Activated CD4-positive, alpha-beta memory T cell treated with anti-CD3 and anti-CD28 coated beads, Interleukin-2, amount 10 ng/mL, durations not matched to agents 7 days and 5 days (primary cell): ENCODE measurements at regions of chr3 and their contacts with region 1.

Region 1: DNA sequence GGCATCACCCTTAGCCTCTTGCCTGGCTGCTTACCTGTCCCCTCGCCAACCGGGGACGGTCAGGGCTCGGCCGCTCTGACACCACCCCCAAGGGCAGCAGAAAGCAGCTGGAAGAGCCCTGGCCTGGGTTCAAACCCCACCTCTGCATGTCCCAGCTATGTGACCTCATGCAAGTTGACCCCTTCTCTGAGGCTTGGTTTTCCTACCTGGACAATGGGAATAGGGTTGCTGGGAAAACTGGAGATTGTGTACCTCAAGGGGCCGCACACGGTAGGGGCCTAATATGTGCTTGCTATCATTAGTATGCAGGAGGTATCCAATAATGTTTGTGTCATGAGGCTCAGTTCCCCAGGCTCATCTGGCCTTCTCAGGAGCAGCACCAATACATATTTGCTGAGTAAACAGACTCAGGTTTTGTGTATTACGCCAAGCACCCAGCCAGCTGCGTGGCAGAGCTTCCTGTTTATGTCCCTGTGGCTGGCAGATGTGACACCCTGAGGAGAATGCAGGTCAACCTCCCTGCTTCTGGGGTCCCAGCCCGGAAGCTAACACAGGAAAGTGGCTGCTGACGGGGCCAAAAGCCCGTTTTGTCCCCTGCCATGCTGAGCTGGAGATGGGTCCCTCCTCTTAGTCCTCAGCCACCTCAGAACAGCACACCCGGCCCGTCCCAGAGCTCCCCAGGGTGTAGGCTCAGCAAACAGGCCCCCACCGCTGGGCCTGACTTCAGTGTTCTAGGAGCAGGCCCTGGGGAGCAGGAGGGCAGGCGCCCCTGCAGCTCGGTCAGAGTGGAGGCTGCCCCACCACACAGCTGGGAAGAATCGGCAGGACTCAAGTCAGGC is 29.7 kb downstream of the PLXND1 start:
- DNase-seq: peak; percentile 83
- H3K4me3 Mint-ChIP-seq: no peak overlapping the region
- H3K27ac Mint-ChIP-seq: peak overlapping the region; percentile 94
- H3K4me1 Mint-ChIP-seq: peaks cover 40% of the 10 kb centered on the region
- H3K27me3 Mint-ChIP-seq: no peaks in the 10 kb centered on the region

Region 2: DNA sequence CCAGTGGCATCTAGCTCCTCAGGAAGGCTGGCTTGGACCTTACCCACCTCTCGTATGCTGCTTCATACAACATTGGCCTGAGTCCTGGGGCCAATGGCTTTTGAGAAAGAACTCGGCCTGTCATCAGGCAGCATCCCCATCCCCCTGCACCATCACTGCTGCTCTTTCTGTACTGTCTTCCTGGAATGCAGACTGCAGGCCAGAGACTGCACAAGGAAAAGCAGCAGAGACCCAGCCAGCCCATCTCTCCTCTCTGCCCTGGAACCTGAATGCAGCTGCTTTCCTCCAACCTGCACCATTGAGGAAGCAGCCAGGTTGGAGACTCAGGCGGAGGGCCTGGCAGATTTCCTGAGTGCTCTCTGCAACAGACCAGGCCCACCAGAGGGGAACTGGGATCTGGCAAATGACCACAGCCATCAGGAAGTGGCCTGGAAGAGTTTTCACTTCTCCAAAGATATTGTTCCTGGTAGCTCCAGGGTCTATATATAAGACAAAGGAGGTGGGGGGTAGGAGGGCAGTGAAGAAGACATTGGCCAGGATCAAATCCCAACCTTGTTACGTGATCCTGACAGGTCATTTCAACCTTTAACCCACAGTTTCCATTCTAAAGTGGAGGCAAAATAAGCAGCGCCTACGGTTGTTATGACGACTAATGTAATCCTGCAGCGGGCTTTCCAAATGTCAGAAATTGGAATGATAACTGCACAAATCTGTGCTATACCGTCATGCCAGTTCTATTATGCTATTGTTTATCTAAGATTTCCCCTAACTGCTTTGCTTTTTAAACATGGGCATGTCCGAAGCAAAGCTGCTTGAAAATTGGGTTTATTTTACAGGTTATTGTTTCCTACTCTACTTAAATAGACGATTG is 875.2 kb before region 1 on chr3:
- CTCF ChIA-PET with region 1: no interaction called
- POLR2A ChIA-PET with region 1: no interaction called
- DNase-seq: no peak
- H3K4me3 Mint-ChIP-seq: no peak overlapping the region
- H3K27ac Mint-ChIP-seq: no peak overlapping the region
- H3K4me1 Mint-ChIP-seq: peaks cover 7% of the 10 kb centered on the region
- H3K27me3 Mint-ChIP-seq: peaks cover 11% of the 10 kb centered on the region

Region 3: GRCh38 chr3:129439817-129440617 is 136.7 kb before region 1 on chr3 and contains the starts of genes IFT122 and MBD4:
- CTCF ChIA-PET with region 1: no interaction called
- POLR2A ChIA-PET with region 1: interaction called, 23 read pairs
- DNase-seq: peak; percentile 100
- H3K4me3 Mint-ChIP-seq: peak within 1 kb of the TSS; percentile 87
- H3K27ac Mint-ChIP-seq: peak within 1 kb of the TSS; percentile 94
- H3K4me1 Mint-ChIP-seq: peaks cover 66% of the 10 kb centered on the region
- H3K27me3 Mint-ChIP-seq: no peaks in the 10 kb centered on the region
- total RNA-seq, gene IFT122: 22.6 to 22.8 TPM
- total RNA-seq, gene MBD4: 47.1 to 47.4 TPM

Region 4: DNA sequence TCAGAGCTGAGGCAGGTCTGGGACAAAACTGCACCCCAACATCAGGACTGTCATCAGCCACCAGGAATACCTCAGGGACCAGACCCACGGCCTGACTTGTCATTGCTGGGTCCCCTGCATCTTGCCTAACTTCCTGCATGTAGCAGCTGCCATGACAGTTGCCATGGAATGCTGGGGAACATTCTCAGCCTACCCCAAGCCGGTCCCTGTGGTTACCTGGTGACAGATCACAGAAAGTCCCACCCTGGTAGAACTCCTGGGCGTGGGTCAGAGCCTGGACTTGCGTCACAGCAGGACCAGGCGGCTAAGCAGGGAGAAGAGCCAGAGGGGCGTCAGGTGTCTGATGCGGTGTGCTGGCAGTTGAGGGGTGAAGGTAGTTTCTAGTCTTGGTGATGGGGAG is 28.6 kb before region 1 on chr3:
- CTCF ChIA-PET with region 1: no interaction called
- POLR2A ChIA-PET with region 1: no interaction called
- DNase-seq: no peak
- H3K4me3 Mint-ChIP-seq: no peak overlapping the region
- H3K27ac Mint-ChIP-seq: no peak overlapping the region
- H3K4me1 Mint-ChIP-seq: no peaks in the 10 kb centered on the region
- H3K27me3 Mint-ChIP-seq: peaks cover 7% of the 10 kb centered on the region

Region 5: GRCh38 chr3:129558772-129559564 is 17.8 kb before region 1 on chr3:
- CTCF ChIA-PET with region 1: no interaction called
- POLR2A ChIA-PET with region 1: interaction called, 11 read pairs
- DNase-seq: no peak
- H3K4me3 Mint-ChIP-seq: no peak overlapping the region
- H3K27ac Mint-ChIP-seq: no peak overlapping the region
- H3K4me1 Mint-ChIP-seq: peaks cover 22% of the 10 kb centered on the region
- H3K27me3 Mint-ChIP-seq: peaks cover 9% of the 10 kb centered on the region

Region 6: GRCh38 chr3:129593595-129594339 is 17.0 kb after region 1 on chr3:
- CTCF ChIA-PET with region 1: interaction called, 8 read pairs
- POLR2A ChIA-PET with region 1: interaction called, 30 read pairs
- DNase-seq: peak; percentile 86
- H3K4me3 Mint-ChIP-seq: peak overlapping the region; percentile 25
- H3K27ac Mint-ChIP-seq: peak overlapping the region; percentile 64
- H3K4me1 Mint-ChIP-seq: peaks cover 27% of the 10 kb centered on the region
- H3K27me3 Mint-ChIP-seq: peaks cover 46% of the 10 kb centered on the region